ENCODE measurements at regions of chr20 and their contacts with region 1.

Region 1: DNA sequence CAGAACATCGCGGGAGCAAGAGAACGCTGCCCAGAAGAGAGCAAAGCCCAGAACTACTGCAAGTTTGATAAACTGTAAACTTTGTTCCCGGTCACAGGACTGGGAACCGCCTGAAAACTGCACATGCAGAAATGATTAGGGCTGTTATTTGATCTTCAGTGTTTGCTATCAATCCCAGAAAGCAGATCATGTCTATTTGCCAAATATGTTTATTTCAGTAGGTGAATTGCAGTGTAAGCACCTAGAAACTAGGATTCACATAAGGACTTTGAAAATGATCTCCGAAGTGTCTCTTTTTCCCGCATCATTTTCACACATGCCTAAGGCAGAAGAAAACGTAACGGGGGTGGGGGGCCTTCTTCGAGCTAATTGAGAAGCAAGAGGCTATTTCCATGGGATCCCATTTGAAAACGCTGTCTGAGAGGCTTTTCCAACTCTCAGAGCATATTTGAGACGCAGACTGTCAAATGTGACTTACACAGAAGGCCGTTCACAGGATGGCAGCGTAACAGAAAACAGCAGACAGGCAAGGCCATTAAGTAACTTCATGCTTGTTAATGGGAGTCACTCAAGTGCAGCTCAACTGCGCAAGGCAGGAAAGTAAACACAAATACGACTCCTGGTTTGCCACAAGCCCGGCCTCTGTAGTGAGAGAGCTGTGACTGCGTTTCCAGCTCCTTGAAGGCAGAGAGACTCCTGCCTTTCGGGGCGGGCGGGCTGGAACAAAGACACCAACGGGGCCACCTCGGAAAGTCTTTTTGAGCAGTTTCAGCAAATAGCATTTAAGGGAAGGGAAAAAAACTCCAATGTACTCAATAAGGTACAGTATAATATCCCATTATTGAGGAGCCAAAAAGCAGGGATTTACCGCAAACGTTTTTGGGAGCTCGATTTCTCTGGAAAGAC is 144.7 kb upstream of the ZNF217 start:
- DNase-seq: peak; percentile 88
- ATAC-seq: peak; percentile 90
- H3K4me3 ChIP-seq: peak overlapping the region; percentile 44 to 59 (median 45)
- H3K27ac ChIP-seq: peak overlapping the region; percentile 73
- H3K4me1 ChIP-seq: peaks cover 83% of the 10 kb centered on the region
- H3K27me3 ChIP-seq: no peaks in the 10 kb centered on the region; a peak in 1 of 5 replicates
- CTCF ChIP-seq: no peak; the same call in 1 of the 2 replicates
- EP300 ChIP-seq: peak in 1 of 2 experiments; percentile 63; a peak in 1 of 4 replicates
- POLR2A ChIP-seq: peak; percentile 58 to 74
- RAD21 ChIP-seq: 0 out of 2 replicates have a peak, but pooled peaks have one; percentile 24

Region 2: DNA sequence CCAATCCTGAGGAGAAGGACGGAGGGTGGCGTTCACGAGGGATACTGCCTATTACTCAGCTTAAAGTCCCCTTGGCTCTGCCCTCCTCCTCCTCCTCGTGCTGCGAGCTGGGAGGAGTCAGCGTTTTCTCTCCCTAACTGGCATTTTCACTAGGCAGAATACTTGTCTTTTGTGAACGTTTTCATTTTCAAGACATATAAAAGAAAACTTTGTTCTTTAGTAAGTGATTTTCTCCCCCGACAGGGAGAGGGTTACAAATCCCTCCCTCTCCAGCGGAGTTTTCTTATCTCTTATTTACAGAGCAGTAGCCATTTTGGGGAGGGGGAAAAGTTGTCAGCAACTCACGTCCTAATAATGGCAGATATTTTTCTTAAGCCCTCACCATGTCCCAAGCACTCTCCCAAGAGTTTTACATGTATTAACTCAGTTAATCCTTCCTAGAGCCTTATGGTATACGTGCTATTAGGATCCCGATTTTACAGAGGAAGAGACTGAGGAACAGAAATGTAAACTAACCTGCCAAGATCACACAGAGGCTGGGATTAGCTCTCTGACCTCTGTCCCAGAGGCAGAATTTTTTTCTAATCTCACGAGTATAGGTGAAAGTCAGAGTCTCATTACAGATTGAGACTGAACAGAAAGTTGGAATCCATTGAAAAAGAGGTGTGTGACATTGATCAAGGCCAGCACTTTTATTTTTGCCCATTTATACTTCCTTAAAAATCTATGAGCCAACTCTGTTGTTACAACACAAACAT is 114.7 kb before region 1 on chr20:
- CTCF ChIA-PET with region 1: no interaction called
- POLR2A ChIA-PET with region 1: interaction called, 46 read pairs
- in situ Hi-C with region 1: no loop called
- intact Hi-C with region 1: loop called (anchors 1 kb)
- DNase-seq: peak; percentile 77
- ATAC-seq: peak; percentile 88
- H3K4me3 ChIP-seq: peak overlapping the region; percentile 54 to 66 (median 66)
- H3K27ac ChIP-seq: peak overlapping the region; percentile 93
- H3K4me1 ChIP-seq: peaks cover 38% of the 10 kb centered on the region
- H3K27me3 ChIP-seq: no peaks in the 10 kb centered on the region
- CTCF ChIP-seq: peak; percentile 46
- EP300 ChIP-seq: peak in 1 of 2 experiments; percentile 64; a peak in 1 of 4 replicates
- POLR2A ChIP-seq: peak; percentile 78 to 81
- RAD21 ChIP-seq: peak; percentile 22; the same call in 1 of the 2 replicates

Region 3: DNA sequence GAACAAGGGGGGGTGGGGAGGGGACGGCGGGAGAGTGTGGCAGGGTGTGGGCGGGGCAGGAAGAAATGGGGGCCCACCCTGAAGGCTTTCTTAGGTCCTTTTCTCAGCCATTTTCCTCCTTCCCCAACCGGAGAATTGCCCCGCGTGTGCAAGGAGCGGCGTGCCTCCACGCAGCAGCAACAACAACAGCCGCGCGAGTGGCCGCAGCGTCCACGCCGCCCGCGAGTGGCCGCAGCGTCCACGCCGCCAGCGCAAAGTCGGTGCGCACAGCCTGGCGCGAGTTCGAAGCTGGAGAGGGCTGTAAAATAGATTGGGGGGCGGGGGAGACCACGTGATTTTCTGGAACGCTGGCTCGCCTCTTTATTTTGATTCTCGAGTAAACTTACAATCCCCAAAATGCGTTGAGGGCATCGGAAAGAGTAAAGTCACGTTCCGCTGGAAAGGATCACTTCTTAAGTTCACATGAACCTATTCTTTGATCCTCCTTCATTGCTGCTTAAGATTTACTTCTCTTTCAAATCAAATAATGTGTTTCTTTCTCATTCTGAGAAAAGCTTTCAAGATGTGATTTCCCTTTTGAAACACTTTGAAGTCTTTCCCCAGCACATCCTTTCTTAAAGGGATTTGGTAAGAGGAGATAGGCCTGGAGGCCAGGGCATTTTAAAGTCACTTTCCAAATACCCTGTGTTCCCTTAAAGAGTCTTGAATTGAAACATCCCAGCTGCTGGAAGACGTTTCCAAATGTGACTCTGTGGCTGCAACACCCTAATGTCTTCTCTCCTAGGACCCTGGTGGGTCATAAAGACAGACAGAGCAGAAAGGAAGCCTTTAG is 78.0 kb before region 1 on chr20:
- CTCF ChIA-PET with region 1: no interaction called
- POLR2A ChIA-PET with region 1: interaction called, 11 read pairs
- in situ Hi-C with region 1: no loop called
- intact Hi-C with region 1: no loop called
- DNase-seq: no peak
- ATAC-seq: no peak
- H3K4me3 ChIP-seq: peak overlapping the region in 2 of 3 experiments; percentile 6 to 7; a peak in 2 of 6 replicates
- H3K27ac ChIP-seq: peak overlapping the region; percentile 9
- H3K4me1 ChIP-seq: peaks cover 55% of the 10 kb centered on the region
- H3K27me3 ChIP-seq: no peaks in the 10 kb centered on the region
- CTCF ChIP-seq: no peak
- EP300 ChIP-seq: no peak
- POLR2A ChIP-seq: no peak
- RAD21 ChIP-seq: no peak

Region 4: GRCh38 chr20:53699958-53700305 is 38.4 kb before region 1 on chr20:
- CTCF ChIA-PET with region 1: no interaction called
- POLR2A ChIA-PET with region 1: no interaction called
- in situ Hi-C with region 1: no loop called
- intact Hi-C with region 1: no loop called
- DNase-seq: no peak
- ATAC-seq: no peak
- H3K4me3 ChIP-seq: no peak overlapping the region
- H3K27ac ChIP-seq: no peak overlapping the region
- H3K4me1 ChIP-seq: peaks cover 31% of the 10 kb centered on the region
- H3K27me3 ChIP-seq: no peaks in the 10 kb centered on the region
- CTCF ChIP-seq: no peak
- EP300 ChIP-seq: no peak
- POLR2A ChIP-seq: no peak
- RAD21 ChIP-seq: no peak

Region 5: DNA sequence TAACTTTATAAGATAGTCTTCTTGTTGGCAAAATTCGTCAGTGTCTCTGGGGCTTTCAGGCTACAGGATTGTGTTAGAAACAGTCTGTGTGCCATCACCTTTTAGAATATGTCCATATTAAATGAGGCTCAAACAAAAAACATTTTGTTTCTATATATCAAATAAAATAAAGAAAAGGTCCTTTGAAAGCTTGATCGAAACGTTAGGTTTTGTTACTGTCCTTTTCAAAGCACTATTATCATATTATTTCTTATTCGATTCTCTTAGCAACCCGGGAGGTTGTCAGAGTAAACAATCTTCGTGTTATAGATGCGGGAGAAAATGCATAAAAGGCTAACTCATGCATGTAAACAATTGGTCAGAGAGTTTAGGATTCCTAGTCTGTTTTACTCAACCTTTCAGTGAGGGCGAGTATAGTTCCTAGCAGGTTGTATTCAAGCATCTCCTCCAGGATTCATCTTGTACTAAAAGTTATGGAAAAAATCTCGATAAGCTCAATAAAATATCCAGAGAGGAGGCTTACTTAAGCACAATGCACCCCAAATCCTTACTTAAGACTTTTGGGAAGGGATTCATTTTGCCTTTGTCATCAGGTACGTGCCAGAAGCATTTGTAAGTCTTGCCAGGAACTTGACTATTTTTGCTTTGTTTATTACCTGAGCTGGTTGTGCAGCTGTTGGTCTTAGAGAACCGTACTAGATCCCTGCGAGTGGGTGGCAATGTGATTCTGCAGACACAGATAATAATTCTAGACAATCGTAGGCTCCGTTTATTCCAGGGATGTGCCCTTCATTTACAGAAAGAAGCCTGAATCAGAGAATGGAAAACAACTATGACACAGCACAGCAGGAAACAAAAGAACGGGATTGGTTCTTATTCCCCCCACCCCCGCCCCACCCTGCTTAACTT is 14.9 kb after region 1 on chr20:
- CTCF ChIA-PET with region 1: no interaction called
- POLR2A ChIA-PET with region 1: interaction called, 19 read pairs
- in situ Hi-C with region 1: no loop called
- intact Hi-C with region 1: no loop called
- DNase-seq: no peak
- ATAC-seq: no peak; the same call in 2 of the 3 replicates
- H3K4me3 ChIP-seq: no peak overlapping the region; a peak in 1 of 6 replicates
- H3K27ac ChIP-seq: peak overlapping the region; percentile 48
- H3K4me1 ChIP-seq: peaks cover 59% of the 10 kb centered on the region
- H3K27me3 ChIP-seq: no peaks in the 10 kb centered on the region
- CTCF ChIP-seq: no peak
- EP300 ChIP-seq: peak in 1 of 2 experiments; percentile 40; a peak in 1 of 4 replicates
- POLR2A ChIP-seq: no peak
- RAD21 ChIP-seq: no peak

Region 6: GRCh38 chr20:53786445-53787267 is 48.4 kb after region 1 on chr20:
- CTCF ChIA-PET with region 1: no interaction called
- POLR2A ChIA-PET with region 1: interaction called, 6 read pairs
- in situ Hi-C with region 1: no loop called
- intact Hi-C with region 1: loop called (anchors 5 kb)
- DNase-seq: peak; percentile 56
- ATAC-seq: peak; percentile 77
- H3K4me3 ChIP-seq: peak overlapping the region; percentile 26 to 52 (median 27)
- H3K27ac ChIP-seq: peak overlapping the region; percentile 72
- H3K4me1 ChIP-seq: peaks cover 65% of the 10 kb centered on the region
- H3K27me3 ChIP-seq: no peaks in the 10 kb centered on the region
- CTCF ChIP-seq: peak; percentile 46
- EP300 ChIP-seq: peak in 1 of 2 experiments; percentile 82; a peak in 2 of 4 replicates
- POLR2A ChIP-seq: no peak
- RAD21 ChIP-seq: peak; percentile 40

Region 7: GRCh38 chr20:53869466-53870258 is 131.4 kb after region 1 on chr20:
- CTCF ChIA-PET with region 1: interaction called, 5 read pairs
- POLR2A ChIA-PET with region 1: interaction called, 35 read pairs
- in situ Hi-C with region 1: no loop called
- intact Hi-C with region 1: loop called (anchors 1 kb)
- DNase-seq: peak; percentile 96
- ATAC-seq: peak; percentile 92
- H3K4me3 ChIP-seq: peak overlapping the region in 2 of 3 experiments; percentile 8; a peak in 2 of 6 replicates
- H3K27ac ChIP-seq: peak overlapping the region; percentile 37
- H3K4me1 ChIP-seq: peaks cover 77% of the 10 kb centered on the region
- H3K27me3 ChIP-seq: no peaks in the 10 kb centered on the region
- CTCF ChIP-seq: peak; percentile 99
- EP300 ChIP-seq: peak in 1 of 2 experiments; percentile 79; a peak in 3 of 4 replicates
- POLR2A ChIP-seq: no peak
- RAD21 ChIP-seq: peak; percentile 97

Region 8: DNA sequence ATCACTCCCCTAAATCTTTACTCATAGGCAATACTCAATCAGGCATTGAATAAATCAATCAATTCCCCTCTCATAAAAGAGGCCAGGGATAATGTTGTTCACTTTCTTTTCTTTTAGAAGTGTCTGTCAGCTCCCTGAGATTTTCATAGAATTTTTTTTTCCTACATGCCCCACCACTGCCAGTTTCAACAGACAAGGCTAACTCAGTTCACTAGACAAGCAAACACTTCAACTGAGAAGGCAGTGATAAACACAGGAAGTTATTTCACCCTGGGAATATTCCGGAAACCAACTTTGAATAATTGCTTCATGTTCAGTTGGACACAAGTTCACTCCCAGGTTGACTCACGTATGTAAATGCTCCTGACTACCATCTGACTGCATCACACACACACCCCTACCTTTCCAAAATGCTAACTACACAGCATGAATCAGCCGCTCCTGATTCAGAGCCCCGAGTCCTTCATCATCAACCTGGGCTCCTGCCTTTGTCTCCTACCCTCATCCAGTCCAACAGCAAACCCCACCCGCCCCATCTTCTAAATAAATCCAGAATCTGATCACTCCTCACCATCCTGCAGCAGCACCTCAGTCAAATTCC is 188.2 kb after region 1 on chr20:
- CTCF ChIA-PET with region 1: no interaction called
- POLR2A ChIA-PET with region 1: no interaction called
- in situ Hi-C with region 1: no loop called
- intact Hi-C with region 1: no loop called
- DNase-seq: peak; percentile 98
- ATAC-seq: peak; percentile 94
- H3K4me3 ChIP-seq: peak overlapping the region in 2 of 3 experiments; percentile 3 to 31; a peak in 1 of 6 replicates
- H3K27ac ChIP-seq: peak overlapping the region; percentile 24
- H3K4me1 ChIP-seq: peaks cover 62% of the 10 kb centered on the region
- H3K27me3 ChIP-seq: peaks cover 1 to 5% of the 10 kb centered on the region in 2 experiments; a peak in 2 of 5 replicates
- CTCF ChIP-seq: no peak
- EP300 ChIP-seq: peak; percentile 65 to 88; a peak in 3 of 4 replicates
- POLR2A ChIP-seq: 0 out of 4 replicates have a peak, but pooled peaks of 1 of the 2 experiments have one; percentile 25
- RAD21 ChIP-seq: no peak

Measured in HepG2 (cell line).